ENCODE measurements at regions of chr7 and their contacts with region 1.

Region 1: DNA sequence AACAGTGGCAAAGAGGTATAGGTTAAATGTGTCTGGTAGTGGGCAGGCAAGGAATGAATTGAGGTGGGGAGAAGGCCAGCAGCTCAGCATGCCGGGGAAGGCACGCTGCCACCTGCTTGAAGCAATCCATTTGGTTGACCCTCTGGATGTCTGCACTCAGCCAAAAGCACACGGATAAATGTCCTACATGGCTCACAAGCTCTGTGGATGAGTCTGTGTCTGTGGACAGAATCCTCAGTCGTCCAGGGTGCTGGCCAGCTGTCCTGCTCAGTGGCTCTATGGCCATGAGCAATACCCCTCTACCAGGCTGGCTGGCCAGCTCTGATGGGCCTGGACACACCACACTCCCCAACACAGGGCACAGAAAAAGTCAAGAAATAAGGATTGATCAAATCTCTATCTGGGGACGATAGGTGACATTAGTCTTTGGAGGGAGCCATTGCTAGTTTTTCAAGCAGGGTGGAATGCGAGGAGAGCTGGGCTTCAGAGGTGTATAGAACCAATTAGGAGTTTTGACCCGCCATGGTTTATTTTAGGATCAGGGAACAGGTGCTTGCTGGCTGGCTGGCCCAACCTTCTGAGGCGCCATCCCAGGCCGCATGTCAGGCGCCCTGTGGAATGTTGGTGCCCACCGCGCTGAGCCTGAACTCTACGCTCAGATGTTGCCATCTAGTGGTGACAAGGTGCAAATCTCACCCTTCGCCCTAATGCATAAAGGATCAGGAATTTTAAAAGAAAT is 493.4 kb downstream of the TNS3 start:
- DNase-seq: peak; percentile 56 to 67
- H3K4me3 ChIP-seq: no peak overlapping the region
- H3K27ac ChIP-seq: no peak overlapping the region
- H3K4me1 ChIP-seq: no peaks in the 10 kb centered on the region
- H3K27me3 ChIP-seq: no peaks in the 10 kb centered on the region
- CTCF ChIP-seq: peak; percentile 99

Region 2: DNA sequence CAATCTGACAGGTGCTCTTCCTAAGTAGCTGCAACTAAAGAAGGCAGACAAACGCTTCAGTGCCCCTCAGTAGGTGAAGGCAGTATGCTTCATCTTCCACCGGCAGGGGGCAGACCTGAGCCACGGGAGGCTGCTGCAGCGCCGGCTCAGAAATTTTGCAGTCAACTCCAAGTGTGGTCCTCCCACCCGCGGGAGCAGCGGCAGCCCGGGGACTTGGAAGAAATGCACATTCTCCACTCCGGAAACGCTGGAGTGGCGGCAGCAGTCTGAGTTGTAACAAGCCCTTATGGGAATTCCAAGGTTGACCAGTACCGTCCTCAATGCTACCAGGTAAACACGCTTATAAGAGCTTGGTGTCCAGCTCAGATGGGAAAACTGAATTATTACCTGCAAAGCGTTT is 1170.8 kb before region 1 on chr7:
- CTCF ChIA-PET with region 1: interaction called, 6 read pairs
- POLR2A ChIA-PET with region 1: no interaction called
- intact Hi-C with region 1: loop called (anchors 1 kb)
- DNase-seq: peak; percentile 62 to 88
- H3K4me3 ChIP-seq: peak overlapping the region; percentile 84
- H3K27ac ChIP-seq: no peak overlapping the region
- H3K4me1 ChIP-seq: peaks cover 21% of the 10 kb centered on the region
- H3K27me3 ChIP-seq: no peaks in the 10 kb centered on the region
- CTCF ChIP-seq: peak; percentile 100

Region 3: GRCh38 chr7:46032984-46033383 is 1055.5 kb before region 1 on chr7:
- CTCF ChIA-PET with region 1: no interaction called
- POLR2A ChIA-PET with region 1: no interaction called
- intact Hi-C with region 1: loop called (anchors 1 kb)
- DNase-seq: peak; percentile 54 to 99
- H3K4me3 ChIP-seq: no peak overlapping the region; the same call in 1 of the 2 replicates
- H3K27ac ChIP-seq: peak overlapping the region; percentile 92
- H3K4me1 ChIP-seq: peaks cover 58% of the 10 kb centered on the region
- H3K27me3 ChIP-seq: no peaks in the 10 kb centered on the region
- CTCF ChIP-seq: no peak

Region 4: GRCh38 chr7:46522354-46522906 is 566.1 kb before region 1 on chr7:
- CTCF ChIA-PET with region 1: no interaction called
- POLR2A ChIA-PET with region 1: interaction called, 16 read pairs
- intact Hi-C with region 1: no loop called
- DNase-seq: no peak
- H3K4me3 ChIP-seq: no peak overlapping the region
- H3K27ac ChIP-seq: no peak overlapping the region
- H3K4me1 ChIP-seq: no peaks in the 10 kb centered on the region
- H3K27me3 ChIP-seq: no peaks in the 10 kb centered on the region
- CTCF ChIP-seq: no peak

Region 5: GRCh38 chr7:46651073-46651472 is 437.4 kb before region 1 on chr7:
- CTCF ChIA-PET with region 1: no interaction called
- POLR2A ChIA-PET with region 1: no interaction called
- intact Hi-C with region 1: loop called (anchors 1 kb)
- DNase-seq: peak; percentile 79 to 97
- H3K4me3 ChIP-seq: no peak overlapping the region
- H3K27ac ChIP-seq: peak overlapping the region; percentile 96
- H3K4me1 ChIP-seq: peaks cover 35% of the 10 kb centered on the region
- H3K27me3 ChIP-seq: no peaks in the 10 kb centered on the region
- CTCF ChIP-seq: no peak

Region 6: DNA sequence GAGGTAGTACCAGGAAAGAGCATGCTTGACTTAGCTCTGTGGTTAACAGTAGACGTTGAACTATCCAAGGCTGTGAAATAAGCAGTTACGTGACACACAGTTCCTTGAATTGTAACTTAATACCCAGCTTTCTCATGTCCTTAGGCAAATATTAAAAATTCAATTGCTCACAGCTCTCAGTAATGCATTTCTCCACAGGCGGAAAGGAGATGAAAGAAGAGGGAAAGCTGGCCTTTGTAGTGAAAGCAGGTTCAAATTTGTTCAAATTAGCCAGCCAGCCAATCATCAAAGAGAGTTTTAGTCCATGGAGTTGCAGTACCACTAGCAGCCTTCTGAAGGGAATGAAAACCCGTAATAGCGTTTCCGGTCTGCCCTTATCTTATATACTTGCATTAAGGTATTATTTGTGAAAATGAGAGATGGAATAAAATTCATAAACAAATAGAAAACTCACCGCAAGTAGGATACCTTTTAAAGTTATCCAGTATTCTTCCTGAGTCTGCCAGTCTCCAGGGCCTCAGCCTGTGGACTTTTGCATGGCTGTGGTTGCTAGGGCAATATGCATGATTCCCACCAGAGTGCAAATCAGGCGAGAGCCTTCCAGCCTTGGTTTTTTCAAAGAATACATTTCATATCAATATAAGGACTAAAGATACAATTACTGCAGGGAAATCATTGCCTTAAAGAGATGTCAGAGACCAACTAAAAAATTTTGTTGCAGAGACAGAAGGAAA is 302.1 kb before region 1 on chr7:
- CTCF ChIA-PET with region 1: no interaction called
- POLR2A ChIA-PET with region 1: no interaction called
- intact Hi-C with region 1: loop called (anchors 10 kb)
- DNase-seq: peak; percentile 40 to 95
- H3K4me3 ChIP-seq: no peak overlapping the region
- H3K27ac ChIP-seq: peak overlapping the region; percentile 60
- H3K4me1 ChIP-seq: peaks cover 35% of the 10 kb centered on the region
- H3K27me3 ChIP-seq: no peaks in the 10 kb centered on the region
- CTCF ChIP-seq: no peak

Region 7: DNA sequence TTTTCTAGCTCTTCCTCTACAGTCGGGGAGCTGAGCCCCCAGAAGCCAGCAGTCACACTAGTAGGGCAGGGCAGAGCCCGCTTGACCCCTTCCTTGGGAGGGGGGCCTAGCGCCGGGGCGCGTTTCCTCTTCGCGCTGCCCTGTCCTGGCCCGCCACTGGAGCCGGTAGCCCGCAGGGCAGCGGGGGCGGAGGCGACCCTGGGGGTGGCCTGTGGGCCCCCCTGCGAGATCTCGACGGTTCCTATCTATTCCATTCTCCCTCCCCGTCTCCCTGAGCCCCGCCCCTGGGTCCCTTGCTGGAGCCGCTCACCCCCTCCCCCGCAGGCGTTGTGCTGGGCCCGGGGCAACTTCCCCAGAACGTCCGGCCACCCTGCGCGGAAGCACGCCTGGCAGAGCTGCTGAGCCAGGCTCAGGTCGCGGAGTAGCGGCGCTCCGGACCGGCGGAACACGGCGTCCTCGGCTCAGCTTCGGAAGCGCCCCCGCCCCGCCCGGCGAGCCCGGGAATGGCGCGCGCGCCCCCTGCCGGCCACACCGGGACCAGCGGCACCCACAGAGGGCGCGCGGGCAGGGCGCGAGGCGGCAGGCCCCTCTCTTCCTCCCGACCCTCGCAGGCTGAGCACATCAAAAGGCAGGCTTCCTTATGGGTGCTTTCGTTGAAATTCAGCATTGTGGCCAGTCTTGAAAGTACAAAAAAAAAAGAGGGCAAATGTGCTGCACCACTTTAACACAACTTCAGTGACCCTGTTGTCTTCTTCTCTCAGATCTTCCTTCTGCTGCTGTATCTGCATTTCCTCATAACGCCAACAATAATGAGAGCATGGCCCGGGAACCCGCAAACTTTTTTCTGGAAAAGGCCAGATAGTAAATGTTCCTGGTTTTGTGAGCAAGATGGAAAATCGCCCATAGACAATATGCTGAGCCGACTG is 165.8 kb after region 1 on chr7:
- CTCF ChIA-PET with region 1: no interaction called
- POLR2A ChIA-PET with region 1: no interaction called
- intact Hi-C with region 1: no loop called
- DNase-seq: peak; percentile 52 to 79
- H3K4me3 ChIP-seq: peak overlapping the region; percentile 63
- H3K27ac ChIP-seq: no peak overlapping the region
- H3K4me1 ChIP-seq: peaks cover 19% of the 10 kb centered on the region
- H3K27me3 ChIP-seq: no peaks in the 10 kb centered on the region
- CTCF ChIP-seq: peak; percentile 89

Region 8: GRCh38 chr7:47293884-47294555 is 205.5 kb after region 1 on chr7:
- CTCF ChIA-PET with region 1: no interaction called
- POLR2A ChIA-PET with region 1: no interaction called
- intact Hi-C with region 1: no loop called
- DNase-seq: no peak
- H3K4me3 ChIP-seq: no peak overlapping the region
- H3K27ac ChIP-seq: no peak overlapping the region
- H3K4me1 ChIP-seq: peaks cover 32% of the 10 kb centered on the region
- H3K27me3 ChIP-seq: no peaks in the 10 kb centered on the region
- CTCF ChIP-seq: no peak